SK-N-SH (cell line): ENCODE measurements at regions of chr15 and their contacts with region 1.

Region 1: GRCh38 chr15:65275728-65276126 is 11.0 kb downstream of the PARP16 start:
- DNase-seq: no peak
- H3K4me3 ChIP-seq: no peak overlapping the region
- H3K27ac ChIP-seq: no peak overlapping the region
- H3K4me1 ChIP-seq: peaks cover 0 to 6% of the 10 kb centered on the region in 2 experiments; a peak in 1 of 4 replicates
- H3K27me3 ChIP-seq: no peaks in the 10 kb centered on the region
- CTCF ChIP-seq: no peak
- EP300 ChIP-seq: no peak
- RAD21 ChIP-seq: no peak

Region 2: DNA sequence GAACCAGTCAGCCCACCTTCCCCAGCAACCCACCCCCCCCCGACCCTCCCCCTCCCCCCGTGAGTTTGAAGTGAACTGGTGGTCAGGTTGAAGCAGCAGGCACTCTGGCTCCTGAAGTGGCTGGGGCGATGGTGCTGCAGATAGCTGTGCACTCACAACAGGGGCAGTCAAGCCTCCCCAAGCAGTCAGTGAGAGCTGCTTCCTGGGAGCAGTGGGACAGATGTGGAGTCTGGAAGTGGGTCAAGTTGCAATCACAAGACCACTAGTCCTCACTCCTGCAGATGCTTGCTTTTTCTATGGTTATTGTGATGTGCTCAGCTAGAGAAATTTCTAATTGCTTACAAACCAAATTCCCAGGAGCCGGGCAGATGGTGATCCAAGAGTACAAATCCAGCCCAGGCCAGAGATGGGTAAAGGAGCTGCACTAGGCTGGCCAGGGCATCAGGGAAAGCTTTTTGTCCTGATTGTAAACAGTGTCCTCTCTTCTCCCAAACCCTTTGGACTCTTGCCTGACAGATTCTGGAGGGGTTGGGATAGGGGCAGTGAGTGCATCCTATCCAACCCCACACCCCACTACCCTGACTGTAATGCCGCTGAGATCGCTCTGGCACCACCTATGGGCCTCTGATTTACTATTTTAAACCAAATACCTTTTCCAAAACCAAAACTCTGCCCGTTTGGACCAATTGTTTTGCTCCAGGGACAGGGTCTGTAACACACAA is 80.7 kb before region 1 on chr15:
- CTCF ChIA-PET with region 1: interaction called, 63 read pairs
- POLR2A ChIA-PET with region 1: no interaction called
- DNase-seq: no peak
- H3K4me3 ChIP-seq: no peak overlapping the region
- H3K27ac ChIP-seq: no peak overlapping the region
- H3K4me1 ChIP-seq: peaks cover 0 to 2% of the 10 kb centered on the region in 2 experiments; a peak in 1 of 4 replicates
- H3K27me3 ChIP-seq: no peaks in the 10 kb centered on the region
- CTCF ChIP-seq: no peak
- EP300 ChIP-seq: no peak
- RAD21 ChIP-seq: no peak

Region 3: GRCh38 chr15:65212097-65212496 is 63.6 kb before region 1 on chr15:
- CTCF ChIA-PET with region 1: interaction called, 21 read pairs
- POLR2A ChIA-PET with region 1: no interaction called
- DNase-seq: peak; percentile 52
- H3K4me3 ChIP-seq: no peak overlapping the region; a peak in 1 of 4 replicates
- H3K27ac ChIP-seq: no peak overlapping the region
- H3K4me1 ChIP-seq: peaks cover 9 to 38% of the 10 kb centered on the region in 2 experiments; a peak in 2 of 4 replicates
- H3K27me3 ChIP-seq: no peaks in the 10 kb centered on the region
- CTCF ChIP-seq: peak; percentile 54
- EP300 ChIP-seq: no peak
- RAD21 ChIP-seq: no peak

Region 4: GRCh38 chr15:65258375-65259262 is 17.1 kb before region 1 on chr15:
- CTCF ChIA-PET with region 1: interaction called, 13 read pairs
- POLR2A ChIA-PET with region 1: no interaction called
- DNase-seq: no peak
- H3K4me3 ChIP-seq: no peak overlapping the region
- H3K27ac ChIP-seq: no peak overlapping the region
- H3K4me1 ChIP-seq: peaks cover 0 to 2% of the 10 kb centered on the region in 2 experiments; a peak in 1 of 4 replicates
- H3K27me3 ChIP-seq: no peaks in the 10 kb centered on the region
- CTCF ChIP-seq: no peak
- EP300 ChIP-seq: no peak
- RAD21 ChIP-seq: no peak

Region 5: GRCh38 chr15:65298731-65299130 is 23.0 kb after region 1 on chr15:
- CTCF ChIA-PET with region 1: interaction called, 13 read pairs
- POLR2A ChIA-PET with region 1: no interaction called
- DNase-seq: no peak
- H3K4me3 ChIP-seq: no peak overlapping the region
- H3K27ac ChIP-seq: no peak overlapping the region
- H3K4me1 ChIP-seq: peaks cover 5% of the 10 kb centered on the region in 2 experiments; a peak in 2 of 4 replicates
- H3K27me3 ChIP-seq: no peaks in the 10 kb centered on the region
- CTCF ChIP-seq: no peak
- EP300 ChIP-seq: no peak
- RAD21 ChIP-seq: no peak